Cardiac septum (tissue), 1 donor: ENCODE measurements at regions of chr6 and their contacts with region 1.

Region 1: GRCh38 chr6:31271641-31272357 is at the start of gene HLA-C:
- DNase-seq: peak; percentile 95
- total RNA-seq, gene HLA-C: 237 TPM

Region 2: DNA sequence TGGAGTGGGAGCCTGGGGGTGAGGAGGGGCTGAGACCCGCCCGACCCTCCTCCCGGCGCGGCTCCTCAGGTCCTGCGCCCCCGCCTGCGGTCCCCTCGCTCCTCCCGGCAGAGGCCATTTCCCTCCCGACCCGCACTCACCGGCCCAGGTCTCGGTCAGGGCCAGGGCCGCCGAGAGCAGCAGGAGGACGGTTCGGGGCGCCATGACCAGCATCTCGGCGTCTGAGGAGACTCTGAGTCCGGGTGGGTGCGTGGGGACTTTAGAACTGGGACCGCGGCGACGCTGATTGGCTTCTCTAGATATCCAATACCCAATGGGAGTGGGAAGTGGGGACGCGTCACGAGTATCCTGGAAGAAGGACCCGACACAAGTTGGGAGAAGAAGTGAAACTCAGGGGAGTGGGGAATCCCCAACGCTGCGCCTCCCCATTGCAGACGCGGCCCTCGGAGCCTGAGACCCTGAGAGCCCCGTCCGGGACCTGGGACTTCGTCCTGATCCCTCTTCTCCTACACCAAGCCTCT is 85.2 kb after region 1 on chr6 and contains the start of gene HLA-B:
- intact Hi-C with region 1: loop called (anchors 5 kb)
- DNase-seq: peak; percentile 88
- total RNA-seq, gene HLA-B: 409 TPM

Region 3: GRCh38 chr6:31441365-31442267 is 169.8 kb after region 1 on chr6:
- intact Hi-C with region 1: no loop called
- DNase-seq: peak; percentile 95